B cell (primary cell): ENCODE measurements at regions of chr14 and their contacts with region 1.

Region 1: GRCh38 chr14:75307700-75308379 is 29.2 kb downstream of the FOS start:
- DNase-seq: peak; percentile 79
- ATAC-seq: peak; percentile 59
- H3K4me3 ChIP-seq: no peak overlapping the region
- H3K4me3 Mint-ChIP-seq: peak overlapping the region; percentile 13
- H3K27ac ChIP-seq: no peak overlapping the region
- H3K27ac Mint-ChIP-seq: no peak overlapping the region
- H3K4me1 ChIP-seq: peaks cover 3 to 18% of the 10 kb centered on the region in 2 donors
- H3K4me1 Mint-ChIP-seq: peaks cover 15% of the 10 kb centered on the region
- H3K27me3 ChIP-seq: no peaks in the 10 kb centered on the region
- H3K27me3 Mint-ChIP-seq: no peaks in the 10 kb centered on the region
- CTCF ChIP-seq: peak; percentile 80

Region 2: GRCh38 chr14:74945823-74946682 is 361.8 kb before region 1 on chr14:
- CTCF ChIA-PET with region 1: interaction called, 5 read pairs
- POLR2A ChIA-PET with region 1: no interaction called
- intact Hi-C with region 1: loop called (anchors 10 kb)
- DNase-seq: peak; percentile 80
- ATAC-seq: peak; percentile 71
- H3K4me3 ChIP-seq: no peak overlapping the region
- H3K4me3 Mint-ChIP-seq: peak overlapping the region; percentile 32
- H3K27ac ChIP-seq: no peak overlapping the region
- H3K27ac Mint-ChIP-seq: peak overlapping the region; percentile 72
- H3K4me1 ChIP-seq: peaks cover 31 to 35% of the 10 kb centered on the region in 2 donors
- H3K4me1 Mint-ChIP-seq: peaks cover 34% of the 10 kb centered on the region
- H3K27me3 ChIP-seq: no peaks in the 10 kb centered on the region
- H3K27me3 Mint-ChIP-seq: no peaks in the 10 kb centered on the region
- CTCF ChIP-seq: peak; percentile 97

Region 3: GRCh38 chr14:75132382-75133086 is 175.3 kb before region 1 on chr14:
- CTCF ChIA-PET with region 1: interaction called, 321 read pairs
- POLR2A ChIA-PET with region 1: no interaction called
- intact Hi-C with region 1: loop called (anchors 1 kb)
- DNase-seq: peak; percentile 85
- ATAC-seq: peak; percentile 95
- H3K4me3 ChIP-seq: no peak overlapping the region
- H3K4me3 Mint-ChIP-seq: no peak overlapping the region
- H3K27ac ChIP-seq: peak overlapping the region in 1 of 2 donors; percentile 49
- H3K27ac Mint-ChIP-seq: peak overlapping the region; percentile 3
- H3K4me1 ChIP-seq: peaks cover 4 to 5% of the 10 kb centered on the region in 2 donors
- H3K4me1 Mint-ChIP-seq: peaks cover 14% of the 10 kb centered on the region
- H3K27me3 ChIP-seq: no peaks in the 10 kb centered on the region
- H3K27me3 Mint-ChIP-seq: no peaks in the 10 kb centered on the region
- CTCF ChIP-seq: peak; percentile 78

Region 4: GRCh38 chr14:75141967-75142366 is 165.9 kb before region 1 on chr14:
- CTCF ChIA-PET with region 1: interaction called, 266 read pairs
- POLR2A ChIA-PET with region 1: no interaction called
- intact Hi-C with region 1: no loop called
- DNase-seq: peak; percentile 43
- ATAC-seq: no peak
- H3K4me3 ChIP-seq: no peak overlapping the region
- H3K4me3 Mint-ChIP-seq: no peak overlapping the region
- H3K27ac ChIP-seq: peak overlapping the region in 1 of 2 donors; percentile 56
- H3K27ac Mint-ChIP-seq: peak overlapping the region; percentile 23
- H3K4me1 ChIP-seq: peaks cover 33 to 45% of the 10 kb centered on the region in 2 donors
- H3K4me1 Mint-ChIP-seq: peaks cover 49% of the 10 kb centered on the region
- H3K27me3 ChIP-seq: no peaks in the 10 kb centered on the region
- H3K27me3 Mint-ChIP-seq: no peaks in the 10 kb centered on the region
- CTCF ChIP-seq: peak; percentile 45

Region 5: GRCh38 chr14:75427482-75428229 is 119.8 kb after region 1 on chr14 and contains the start of gene JDP2:
- CTCF ChIA-PET with region 1: interaction called, 5 read pairs
- POLR2A ChIA-PET with region 1: no interaction called
- intact Hi-C with region 1: loop called (anchors 1 kb)
- DNase-seq: peak; percentile 77
- ATAC-seq: peak; percentile 53
- H3K4me3 ChIP-seq: peak within 1 kb of the TSS; percentile 45 to 86 (median 72)
- H3K4me3 Mint-ChIP-seq: peak within 1 kb of the TSS; percentile 94
- H3K27ac ChIP-seq: peak within 1 kb of the TSS; percentile 86
- H3K27ac Mint-ChIP-seq: peak within 1 kb of the TSS; percentile 99
- H3K4me1 ChIP-seq: peaks cover 23 to 30% of the 10 kb centered on the region in 2 donors
- H3K4me1 Mint-ChIP-seq: peaks cover 38% of the 10 kb centered on the region
- H3K27me3 ChIP-seq: no peaks in the 10 kb centered on the region
- H3K27me3 Mint-ChIP-seq: no peaks in the 10 kb centered on the region
- CTCF ChIP-seq: no peak
- total RNA-seq, gene JDP2: 17.0 and 17.9 TPM in 2 replicates

Region 6: DNA sequence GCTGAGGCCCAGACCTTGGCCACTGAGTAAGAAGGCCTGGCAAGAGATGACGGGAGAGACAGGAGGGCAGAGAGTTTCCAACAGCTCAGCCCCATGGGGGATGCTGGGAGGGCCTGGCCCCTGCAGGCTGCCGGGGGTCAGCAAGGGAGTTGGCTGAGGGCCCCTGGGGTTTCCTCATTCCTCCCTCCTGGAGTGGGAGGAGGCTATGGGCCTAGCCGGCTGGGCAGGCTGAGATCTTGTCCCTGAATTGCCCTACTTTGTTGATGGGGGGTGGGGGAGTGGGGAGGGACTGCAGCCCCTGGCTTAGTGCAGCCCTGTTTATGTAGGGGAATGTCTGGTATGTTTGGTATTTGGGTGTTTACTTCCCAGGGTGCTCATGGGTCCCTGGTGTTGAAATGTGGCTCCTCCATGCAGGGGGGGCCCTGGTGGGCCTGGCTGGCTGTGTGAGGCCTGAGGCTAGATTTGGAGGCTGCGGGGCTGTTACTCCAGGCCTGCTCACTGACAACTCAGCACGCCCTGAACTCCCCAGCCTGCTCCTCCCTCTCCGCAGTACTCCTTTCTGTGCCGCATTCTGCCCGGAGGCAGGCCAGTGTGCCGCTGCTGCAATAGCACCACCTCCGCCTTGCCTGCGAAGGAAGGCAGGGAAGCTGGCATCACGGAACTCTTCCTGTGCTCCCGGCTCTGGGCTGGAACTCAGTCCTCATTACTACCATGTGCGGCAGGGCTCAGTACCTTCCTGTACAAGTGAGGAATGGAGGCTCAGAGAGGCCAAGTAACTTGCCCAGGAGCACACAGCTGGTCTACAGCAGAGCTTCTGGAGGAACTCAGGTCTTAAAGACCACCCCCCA is 145.3 kb after region 1 on chr14:
- CTCF ChIA-PET with region 1: interaction called, 30 read pairs
- POLR2A ChIA-PET with region 1: no interaction called
- intact Hi-C with region 1: loop called (anchors 1 kb)
- DNase-seq: no peak
- ATAC-seq: no peak
- H3K4me3 ChIP-seq: no peak overlapping the region
- H3K4me3 Mint-ChIP-seq: no peak overlapping the region
- H3K27ac ChIP-seq: no peak overlapping the region
- H3K27ac Mint-ChIP-seq: no peak overlapping the region
- H3K4me1 ChIP-seq: peaks cover 0 to 9% of the 10 kb centered on the region in 2 donors
- H3K4me1 Mint-ChIP-seq: peaks cover 8% of the 10 kb centered on the region
- H3K27me3 ChIP-seq: no peaks in the 10 kb centered on the region
- H3K27me3 Mint-ChIP-seq: no peaks in the 10 kb centered on the region
- CTCF ChIP-seq: no peak

Region 7: DNA sequence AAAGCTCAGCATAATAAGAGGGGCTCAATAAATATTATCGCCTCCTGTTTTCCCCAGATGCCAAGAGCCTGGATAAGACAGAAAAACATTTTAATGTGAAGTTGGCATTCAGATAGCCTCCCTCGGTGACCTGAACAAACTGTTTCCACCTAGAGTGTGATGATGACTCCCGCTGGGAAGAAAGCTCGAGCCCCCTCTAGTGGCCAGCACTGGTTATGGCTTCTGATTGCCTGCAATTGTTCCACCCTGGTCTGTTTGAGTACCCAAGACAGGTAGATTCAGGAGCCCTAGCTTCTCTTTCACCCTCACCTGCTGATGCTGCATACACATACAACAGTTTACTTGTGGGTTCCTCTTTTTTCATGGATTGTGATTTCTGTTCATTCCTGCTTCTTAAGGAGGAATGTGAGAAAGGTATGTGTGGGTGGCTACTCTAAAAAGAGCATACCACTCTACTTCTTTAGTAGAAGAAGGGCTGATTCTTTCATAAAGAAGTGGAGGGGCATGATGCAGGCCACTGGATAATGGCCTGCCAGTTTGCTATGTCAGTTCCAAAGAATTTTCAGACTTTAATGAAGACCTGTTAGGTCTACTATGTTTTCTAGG is 346.4 kb after region 1 on chr14:
- CTCF ChIA-PET with region 1: interaction called, 9 read pairs
- POLR2A ChIA-PET with region 1: no interaction called
- intact Hi-C with region 1: loop called (anchors 5 kb)
- DNase-seq: peak; percentile 82
- ATAC-seq: peak; percentile 96
- H3K4me3 ChIP-seq: no peak overlapping the region
- H3K4me3 Mint-ChIP-seq: no peak overlapping the region
- H3K27ac ChIP-seq: no peak overlapping the region
- H3K27ac Mint-ChIP-seq: no peak overlapping the region
- H3K4me1 ChIP-seq: no peaks in the 10 kb centered on the region
- H3K4me1 Mint-ChIP-seq: peaks cover 4% of the 10 kb centered on the region
- H3K27me3 ChIP-seq: no peaks in the 10 kb centered on the region
- H3K27me3 Mint-ChIP-seq: no peaks in the 10 kb centered on the region
- CTCF ChIP-seq: peak; percentile 94